GM18951 (cell line): ENCODE measurements at regions of chr6 and their contacts with region 1.

Region 1: GRCh38 chr6:131532580-131533039 is 40.4 kb upstream of the ARG1 start:
- POLR2A ChIP-seq: no peak

Region 2: GRCh38 chr6:130560231-130560630 is 972.4 kb before region 1 on chr6:
- in situ Hi-C with region 1: no loop called
- POLR2A ChIP-seq: no peak

Region 3: DNA sequence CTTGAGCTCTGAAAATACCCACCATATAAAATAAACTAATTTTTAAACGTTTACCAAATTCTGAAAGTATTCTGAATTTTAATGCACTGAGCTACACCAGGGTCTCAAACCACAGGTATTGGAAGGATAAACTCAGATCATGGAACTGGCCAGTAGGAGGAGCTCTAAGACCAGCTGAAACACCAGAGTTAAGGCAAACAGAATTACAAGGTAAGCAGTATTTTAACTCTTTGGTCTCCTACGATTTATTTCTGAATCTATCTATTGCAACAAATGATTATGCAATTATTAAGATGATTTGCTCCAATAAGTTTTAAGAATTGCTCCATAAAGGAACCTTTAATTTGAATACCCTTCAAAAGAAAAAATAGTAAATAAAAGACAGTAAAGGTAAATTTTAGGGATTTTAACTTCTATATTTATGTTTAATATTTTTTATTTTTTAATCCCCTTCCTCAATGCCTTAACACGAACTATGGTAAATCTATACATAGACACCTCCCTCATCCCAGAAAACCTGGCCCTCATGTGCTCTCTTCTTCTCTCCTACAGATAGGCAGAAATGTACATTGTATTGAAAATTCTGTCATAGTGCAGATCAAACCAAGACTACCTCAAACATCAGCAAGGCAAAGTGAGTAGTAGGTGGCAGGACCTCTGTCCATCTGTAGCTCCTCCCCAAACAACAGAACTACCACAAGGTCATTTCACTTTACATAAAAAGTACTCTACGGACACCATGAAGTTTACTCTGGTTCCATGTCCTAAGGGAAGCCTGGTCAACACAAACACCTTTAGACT is 647.0 kb before region 1 on chr6:
- in situ Hi-C with region 1: loop called (anchors 25 kb)
- POLR2A ChIP-seq: no peak

Region 4: GRCh38 chr6:131199568-131200272 is 332.9 kb before region 1 on chr6:
- in situ Hi-C with region 1: loop called (anchors 25 kb)
- POLR2A ChIP-seq: no peak